ENCODE measurements at regions of chr2 and their contacts with region 1.

Region 1: GRCh38 chr2:20135631-20136050 is 84.2 kb upstream of the LAPTM4A start:
- DNase-seq: peak; percentile 89
- H3K4me3 ChIP-seq: no peak overlapping the region; a peak in 1 of 4 replicates
- H3K27ac ChIP-seq: no peak overlapping the region
- H3K4me1 ChIP-seq: peaks cover 0 to 34% of the 10 kb centered on the region in 2 experiments; a peak in 1 of 4 replicates
- H3K27me3 ChIP-seq: no peaks in the 10 kb centered on the region
- CTCF ChIP-seq: peak; percentile 98
- EP300 ChIP-seq: no peak
- RAD21 ChIP-seq: peak; percentile 84

Region 2: DNA sequence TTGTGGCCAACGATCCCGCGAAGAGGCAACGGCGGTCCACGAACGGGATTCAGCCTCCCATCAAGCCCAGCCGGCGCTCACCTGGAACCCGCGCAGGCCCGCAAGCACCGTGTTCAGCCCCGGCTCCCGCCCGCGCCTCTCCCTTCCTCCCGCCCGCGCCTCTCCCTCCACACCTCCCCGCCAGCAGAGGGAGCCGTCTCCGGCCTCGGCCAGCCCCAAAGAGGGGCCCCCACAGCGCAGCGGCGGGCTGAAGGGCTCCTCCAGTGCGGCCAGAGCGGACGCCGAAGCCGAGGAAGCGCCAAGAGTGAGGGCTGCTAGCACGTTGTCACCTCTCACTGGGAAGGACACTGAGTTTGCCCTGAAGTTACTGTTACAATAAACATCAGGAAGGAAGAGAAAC is 28.9 kb before region 1 on chr2:
- CTCF ChIA-PET with region 1: interaction called, 14 read pairs
- POLR2A ChIA-PET with region 1: no interaction called
- DNase-seq: no peak
- H3K4me3 ChIP-seq: no peak overlapping the region
- H3K27ac ChIP-seq: no peak overlapping the region
- H3K4me1 ChIP-seq: no peaks in the 10 kb centered on the region; a peak in 1 of 4 replicates
- H3K27me3 ChIP-seq: no peaks in the 10 kb centered on the region
- CTCF ChIP-seq: peak; percentile 20; the same call in 1 of the 2 replicates
- EP300 ChIP-seq: no peak
- RAD21 ChIP-seq: no peak

Region 3: DNA sequence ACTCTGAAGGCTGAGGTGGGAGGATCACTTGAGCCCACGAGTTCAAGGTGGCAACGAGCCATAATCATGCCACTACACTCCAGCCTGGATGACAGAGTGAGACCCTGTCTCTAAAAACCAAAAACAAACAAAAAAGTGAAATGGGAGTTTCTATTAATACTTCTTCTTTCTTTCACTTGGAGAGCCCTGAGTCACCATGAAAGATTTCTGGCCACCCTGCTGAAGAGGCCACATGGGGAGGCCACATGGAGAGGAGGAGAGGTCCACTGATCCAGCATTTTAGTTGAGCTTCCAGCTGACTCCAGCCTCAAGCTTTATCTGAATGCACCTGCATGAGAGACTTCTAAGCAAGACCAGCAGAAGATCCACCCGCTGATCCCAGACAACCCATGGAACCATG is 10.0 kb before region 1 on chr2:
- CTCF ChIA-PET with region 1: interaction called, 23 read pairs
- POLR2A ChIA-PET with region 1: no interaction called
- DNase-seq: no peak
- H3K4me3 ChIP-seq: no peak overlapping the region
- H3K27ac ChIP-seq: no peak overlapping the region
- H3K4me1 ChIP-seq: no peaks in the 10 kb centered on the region; a peak in 1 of 4 replicates
- H3K27me3 ChIP-seq: no peaks in the 10 kb centered on the region
- CTCF ChIP-seq: no peak
- EP300 ChIP-seq: no peak
- RAD21 ChIP-seq: no peak

Region 4: GRCh38 chr2:20169741-20170414 is 34.2 kb after region 1 on chr2:
- CTCF ChIA-PET with region 1: interaction called, 10 read pairs
- POLR2A ChIA-PET with region 1: interaction called, 3 read pairs
- DNase-seq: no peak
- H3K4me3 ChIP-seq: no peak overlapping the region
- H3K27ac ChIP-seq: no peak overlapping the region
- H3K4me1 ChIP-seq: peaks cover 6 to 72% of the 10 kb centered on the region in 2 experiments; a peak in 2 of 4 replicates
- H3K27me3 ChIP-seq: no peaks in the 10 kb centered on the region
- CTCF ChIP-seq: no peak
- EP300 ChIP-seq: no peak
- RAD21 ChIP-seq: no peak

Region 5: GRCh38 chr2:20225294-20226151 is 89.9 kb after region 1 on chr2:
- CTCF ChIA-PET with region 1: interaction called, 215 read pairs
- POLR2A ChIA-PET with region 1: interaction called, 12 read pairs
- DNase-seq: no peak
- H3K4me3 ChIP-seq: peak overlapping the region; percentile 68 to 77
- H3K27ac ChIP-seq: peak overlapping the region in 1 of 2 experiments; percentile 99; a peak in 2 of 4 replicates
- H3K4me1 ChIP-seq: peaks cover 26 to 30% of the 10 kb centered on the region in 2 experiments
- H3K27me3 ChIP-seq: no peaks in the 10 kb centered on the region
- CTCF ChIP-seq: peak; percentile 72
- EP300 ChIP-seq: no peak
- RAD21 ChIP-seq: peak; percentile 81

Region 6: GRCh38 chr2:20326163-20326780 is 190.6 kb after region 1 on chr2:
- CTCF ChIA-PET with region 1: interaction called, 16 read pairs
- POLR2A ChIA-PET with region 1: no interaction called
- DNase-seq: peak; percentile 74
- H3K4me3 ChIP-seq: no peak overlapping the region
- H3K27ac ChIP-seq: peak overlapping the region; percentile 18 to 33; a peak in 2 of 4 replicates
- H3K4me1 ChIP-seq: peaks cover 0 to 7% of the 10 kb centered on the region in 2 experiments; a peak in 2 of 4 replicates
- H3K27me3 ChIP-seq: no peaks in the 10 kb centered on the region
- CTCF ChIP-seq: peak; percentile 99
- EP300 ChIP-seq: no peak
- RAD21 ChIP-seq: peak; percentile 81